Natural killer cell (primary cell): ENCODE measurements at regions of chr6 and their contacts with region 1.

Region 1: GRCh38 chr6:3732345-3733141 is 19.0 kb downstream of the PXDC1 start:
- DNase-seq: peak; percentile 56 to 80
- ATAC-seq: peak in 2 of 3 donors; percentile 64 to 79
- H3K4me3 ChIP-seq: no peak overlapping the region
- H3K4me3 Mint-ChIP-seq: no peak overlapping the region
- H3K27ac ChIP-seq: no peak overlapping the region
- H3K27ac Mint-ChIP-seq: no peak overlapping the region
- H3K4me1 ChIP-seq: no peaks in the 10 kb centered on the region
- H3K4me1 Mint-ChIP-seq: peaks cover 5 to 8% of the 10 kb centered on the region in 2 donors
- H3K27me3 ChIP-seq: no peaks in the 10 kb centered on the region
- H3K27me3 Mint-ChIP-seq: peaks cover 28 to 30% of the 10 kb centered on the region in 2 donors
- CTCF ChIP-seq: peak; percentile 75

Region 2: GRCh38 chr6:3278691-3279090 is 453.9 kb before region 1 on chr6:
- intact Hi-C with region 1: loop called (anchors 1 kb)
- DNase-seq: no peak
- ATAC-seq: no peak
- H3K4me3 ChIP-seq: no peak overlapping the region
- H3K4me3 Mint-ChIP-seq: no peak overlapping the region
- H3K27ac ChIP-seq: no peak overlapping the region
- H3K27ac Mint-ChIP-seq: no peak overlapping the region
- H3K4me1 ChIP-seq: no peaks in the 10 kb centered on the region
- H3K4me1 Mint-ChIP-seq: peaks cover 8 to 17% of the 10 kb centered on the region in 2 donors
- H3K27me3 ChIP-seq: no peaks in the 10 kb centered on the region
- H3K27me3 Mint-ChIP-seq: no peaks in the 10 kb centered on the region
- CTCF ChIP-seq: no peak

Region 3: GRCh38 chr6:3410385-3411360 is 321.9 kb before region 1 on chr6:
- intact Hi-C with region 1: loop called (anchors 10 kb)
- DNase-seq: peak; percentile 21 to 84
- ATAC-seq: peak in 2 of 3 donors; percentile 43 to 61
- H3K4me3 ChIP-seq: no peak overlapping the region
- H3K4me3 Mint-ChIP-seq: no peak overlapping the region
- H3K27ac ChIP-seq: no peak overlapping the region
- H3K27ac Mint-ChIP-seq: no peak overlapping the region
- H3K4me1 ChIP-seq: no peaks in the 10 kb centered on the region
- H3K4me1 Mint-ChIP-seq: peaks cover 5 to 12% of the 10 kb centered on the region in 2 donors
- H3K27me3 ChIP-seq: no peaks in the 10 kb centered on the region
- H3K27me3 Mint-ChIP-seq: peaks cover 17 to 25% of the 10 kb centered on the region in 2 donors
- CTCF ChIP-seq: peak; percentile 51